CD8-positive, alpha-beta memory T cell (primary cell): ENCODE measurements at regions of chr16 and their contacts with region 1.

Region 1: GRCh38 chr16:87778830-87779579 is 13.2 kb upstream of the KLHDC4 start:
- DNase-seq: peak; percentile 84 to 92 (median 87)
- H3K4me3 ChIP-seq: no peak overlapping the region
- H3K4me3 Mint-ChIP-seq: peak overlapping the region; percentile 37 to 77 (median 68)
- H3K27ac ChIP-seq: peak overlapping the region; percentile 69
- H3K27ac Mint-ChIP-seq: peak overlapping the region; percentile 34 to 99 (median 96)
- H3K4me1 ChIP-seq: peaks cover 42% of the 10 kb centered on the region
- H3K4me1 Mint-ChIP-seq: peaks cover 30 to 39% (median 36%) of the 10 kb centered on the region in 3 donors
- H3K27me3 ChIP-seq: no peaks in the 10 kb centered on the region
- H3K27me3 Mint-ChIP-seq: peaks cover 0 to 3% of the 10 kb centered on the region in 2 donors

Region 2: DNA sequence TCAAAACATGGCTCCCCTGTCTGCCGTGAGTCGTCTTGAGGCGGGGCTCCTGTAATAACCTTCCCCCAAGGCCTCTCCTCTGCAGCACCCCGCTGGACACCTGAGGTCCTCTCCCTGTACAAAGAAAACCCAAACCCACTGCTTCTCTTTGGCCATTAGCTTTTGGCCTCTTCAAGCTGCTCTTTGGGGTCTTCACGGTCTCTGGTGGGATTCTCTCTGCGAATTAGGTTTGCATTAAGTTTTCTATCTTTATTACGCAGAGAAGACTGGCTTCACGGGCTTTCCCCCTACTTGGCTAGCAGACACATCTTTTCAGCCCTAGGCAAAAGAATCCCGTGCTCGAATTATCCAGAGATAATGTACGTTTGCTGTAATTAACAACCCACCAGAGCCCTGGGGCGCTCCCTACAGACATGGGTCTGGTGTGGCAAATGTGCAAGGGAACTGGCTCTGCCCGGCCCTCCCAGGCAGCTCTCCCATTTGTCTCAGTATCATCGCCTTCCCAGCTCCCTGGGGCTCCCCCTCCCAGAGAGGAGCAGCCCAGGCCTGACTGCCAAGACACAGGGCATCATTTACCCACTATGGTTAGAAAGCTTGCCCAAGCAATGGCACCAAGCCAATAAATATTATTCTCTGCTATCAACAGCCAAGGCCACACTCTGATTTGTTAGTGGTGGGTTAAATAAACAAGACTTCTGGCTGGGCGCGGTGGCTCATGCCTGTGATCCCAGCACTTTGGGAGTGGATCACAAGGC is 11.4 kb after region 1 on chr16:
- CTCF ChIA-PET with region 1: interaction called, 27 read pairs
- POLR2A ChIA-PET with region 1: no interaction called
- DNase-seq: no peak
- H3K4me3 ChIP-seq: no peak overlapping the region
- H3K4me3 Mint-ChIP-seq: no peak overlapping the region
- H3K27ac ChIP-seq: no peak overlapping the region
- H3K27ac Mint-ChIP-seq: no peak overlapping the region
- H3K4me1 ChIP-seq: no peaks in the 10 kb centered on the region
- H3K4me1 Mint-ChIP-seq: no peaks in the 10 kb centered on the region
- H3K27me3 ChIP-seq: no peaks in the 10 kb centered on the region
- H3K27me3 Mint-ChIP-seq: peaks cover 0 to 3% of the 10 kb centered on the region in 2 donors

Region 3: GRCh38 chr16:87844120-87844733 is 65.2 kb after region 1 on chr16:
- CTCF ChIA-PET with region 1: interaction called, 86 read pairs
- POLR2A ChIA-PET with region 1: no interaction called
- DNase-seq: no peak
- H3K4me3 ChIP-seq: no peak overlapping the region
- H3K4me3 Mint-ChIP-seq: peak overlapping the region in 3 of 7 donors; percentile 15 to 37 (median 32)
- H3K27ac ChIP-seq: no peak overlapping the region
- H3K27ac Mint-ChIP-seq: peak overlapping the region in 2 of 8 donors; percentile 17 to 58
- H3K4me1 ChIP-seq: peaks cover 12% of the 10 kb centered on the region
- H3K4me1 Mint-ChIP-seq: peaks cover 1 to 4% (median 3%) of the 10 kb centered on the region in 3 donors
- H3K27me3 ChIP-seq: no peaks in the 10 kb centered on the region
- H3K27me3 Mint-ChIP-seq: no peaks in the 10 kb centered on the region

Region 4: GRCh38 chr16:87860553-87861299 is 81.7 kb after region 1 on chr16:
- CTCF ChIA-PET with region 1: interaction called, 31 read pairs
- POLR2A ChIA-PET with region 1: no interaction called
- DNase-seq: no peak
- H3K4me3 ChIP-seq: no peak overlapping the region
- H3K4me3 Mint-ChIP-seq: peak overlapping the region in 6 of 7 donors; percentile 3 to 74 (median 48)
- H3K27ac ChIP-seq: no peak overlapping the region
- H3K27ac Mint-ChIP-seq: peak overlapping the region; percentile 32 to 95 (median 83)
- H3K4me1 ChIP-seq: peaks cover 34% of the 10 kb centered on the region
- H3K4me1 Mint-ChIP-seq: peaks cover 42 to 74% (median 54%) of the 10 kb centered on the region in 3 donors
- H3K27me3 ChIP-seq: no peaks in the 10 kb centered on the region
- H3K27me3 Mint-ChIP-seq: no peaks in the 10 kb centered on the region

Region 5: DNA sequence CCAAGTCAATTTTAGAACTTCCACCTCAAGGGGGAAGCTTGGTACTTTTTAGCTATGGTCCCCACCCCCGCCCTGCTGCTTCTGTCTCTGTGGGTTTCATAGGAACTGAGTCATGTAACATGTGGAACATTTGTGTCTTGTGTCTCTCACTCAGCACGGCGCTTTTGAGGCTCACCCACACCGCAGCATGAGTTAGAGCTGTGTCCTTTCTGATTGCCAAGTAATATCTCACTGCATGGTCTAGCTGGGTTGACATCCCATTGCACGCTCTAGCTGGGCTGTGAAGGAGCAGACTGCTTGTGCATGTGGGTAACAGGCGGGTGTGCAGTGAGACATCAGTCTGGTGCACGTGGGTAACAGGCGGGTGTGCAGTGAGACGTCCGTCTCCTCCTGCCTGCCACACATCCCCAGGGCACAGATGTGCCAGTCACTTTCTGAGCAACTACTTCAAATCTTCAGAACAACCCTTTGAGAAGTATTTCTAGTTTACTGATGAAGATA is 116.7 kb after region 1 on chr16:
- CTCF ChIA-PET with region 1: interaction called, 16 read pairs
- POLR2A ChIA-PET with region 1: no interaction called
- DNase-seq: peak; percentile 9 to 89 (median 39)
- H3K4me3 ChIP-seq: no peak overlapping the region
- H3K4me3 Mint-ChIP-seq: peak overlapping the region; percentile 54 to 80 (median 65)
- H3K27ac ChIP-seq: no peak overlapping the region
- H3K27ac Mint-ChIP-seq: peak overlapping the region; percentile 48 to 98 (median 92)
- H3K4me1 ChIP-seq: peaks cover 34% of the 10 kb centered on the region
- H3K4me1 Mint-ChIP-seq: peaks cover 31 to 41% (median 33%) of the 10 kb centered on the region in 3 donors
- H3K27me3 ChIP-seq: no peaks in the 10 kb centered on the region
- H3K27me3 Mint-ChIP-seq: no peaks in the 10 kb centered on the region

Region 6: GRCh38 chr16:87963400-87963799 is 184.4 kb after region 1 on chr16:
- CTCF ChIA-PET with region 1: no interaction called
- POLR2A ChIA-PET with region 1: interaction called, 13 read pairs
- DNase-seq: peak; percentile 35 to 72 (median 44)
- H3K4me3 ChIP-seq: no peak overlapping the region
- H3K4me3 Mint-ChIP-seq: peak overlapping the region; percentile 41 to 77 (median 63)
- H3K27ac ChIP-seq: peak overlapping the region; percentile 18
- H3K27ac Mint-ChIP-seq: peak overlapping the region; percentile 4 to 93 (median 86)
- H3K4me1 ChIP-seq: peaks cover 45% of the 10 kb centered on the region
- H3K4me1 Mint-ChIP-seq: peaks cover 52 to 84% (median 62%) of the 10 kb centered on the region in 3 donors
- H3K27me3 ChIP-seq: no peaks in the 10 kb centered on the region
- H3K27me3 Mint-ChIP-seq: no peaks in the 10 kb centered on the region